OCI-LY7 (cell line): ENCODE measurements at regions of chr3 and their contacts with region 1.

Region 1: DNA sequence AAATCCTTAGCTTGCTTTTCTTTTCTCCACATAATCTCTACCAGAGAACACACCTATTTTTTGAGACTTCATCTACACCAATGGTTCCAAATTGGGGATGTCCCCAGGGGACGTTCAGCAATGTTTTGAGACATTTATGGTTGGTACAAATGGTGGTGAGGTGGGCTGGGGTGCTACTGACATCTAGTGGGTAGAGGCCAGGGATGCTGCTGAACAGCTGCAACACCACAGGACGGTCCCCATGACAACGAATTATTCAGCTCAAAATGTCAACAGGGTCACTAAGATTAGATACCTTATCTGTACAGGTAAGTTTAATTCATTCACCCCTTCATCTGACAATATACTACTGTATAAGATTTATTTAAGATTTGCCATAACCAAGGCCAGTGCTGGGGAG is 14.3 kb downstream of the GK5 start:
- DNase-seq: peak; percentile 80
- H3K4me3 ChIP-seq: no peak overlapping the region
- H3K27ac ChIP-seq: no peak overlapping the region
- H3K4me1 ChIP-seq: peaks cover 11% of the 10 kb centered on the region
- CTCF ChIP-seq: peak; percentile 87

Region 2: GRCh38 chr3:142129516-142130171 is 81.4 kb before region 1 on chr3:
- CTCF ChIA-PET with region 1: no interaction called
- POLR2A ChIA-PET with region 1: no interaction called
- intact Hi-C with region 1: loop called (anchors 2 kb)
- DNase-seq: no peak
- H3K4me3 ChIP-seq: no peak overlapping the region
- H3K27ac ChIP-seq: peak overlapping the region; percentile 29
- H3K4me1 ChIP-seq: peaks cover 32% of the 10 kb centered on the region
- CTCF ChIP-seq: no peak

Region 3: GRCh38 chr3:142175478-142175877 is 35.6 kb before region 1 on chr3:
- CTCF ChIA-PET with region 1: no interaction called
- POLR2A ChIA-PET with region 1: no interaction called
- intact Hi-C with region 1: no loop called
- DNase-seq: no peak
- H3K4me3 ChIP-seq: no peak overlapping the region
- H3K27ac ChIP-seq: no peak overlapping the region
- H3K4me1 ChIP-seq: no peaks in the 10 kb centered on the region
- CTCF ChIP-seq: no peak

Region 4: GRCh38 chr3:142337994-142338393 is 127.0 kb after region 1 on chr3:
- CTCF ChIA-PET with region 1: no interaction called
- POLR2A ChIA-PET with region 1: no interaction called
- intact Hi-C with region 1: no loop called
- DNase-seq: no peak
- H3K4me3 ChIP-seq: no peak overlapping the region
- H3K27ac ChIP-seq: no peak overlapping the region
- H3K4me1 ChIP-seq: no peaks in the 10 kb centered on the region
- CTCF ChIP-seq: no peak

Region 5: GRCh38 chr3:142418926-142419592 is 208.0 kb after region 1 on chr3:
- CTCF ChIA-PET with region 1: no interaction called
- POLR2A ChIA-PET with region 1: no interaction called
- intact Hi-C with region 1: no loop called
- DNase-seq: no peak
- H3K4me3 ChIP-seq: no peak overlapping the region
- H3K27ac ChIP-seq: no peak overlapping the region
- H3K4me1 ChIP-seq: no peaks in the 10 kb centered on the region
- CTCF ChIP-seq: no peak